Endothelial cell of umbilical vein (primary cell): ENCODE measurements at regions of chr3 and their contacts with region 1.

Region 1: DNA sequence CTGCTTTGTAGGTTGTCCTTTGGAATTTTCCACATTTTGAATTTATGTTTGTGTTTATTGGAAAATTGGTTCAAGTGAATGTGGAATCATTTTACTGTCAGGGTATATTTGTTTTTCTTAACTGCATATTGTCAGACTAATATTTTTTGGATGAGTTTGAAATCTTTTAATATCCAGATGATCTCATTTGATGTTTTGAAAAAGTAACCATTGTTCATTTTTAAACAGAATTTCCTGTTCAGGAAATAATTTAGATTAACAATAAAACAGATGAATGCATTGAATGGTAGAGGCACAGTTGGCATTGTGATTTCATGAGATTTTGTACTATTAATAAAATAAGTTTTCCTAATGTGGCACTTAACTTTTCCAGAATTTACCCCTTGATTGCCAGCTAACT is 15.5 kb downstream of the TRAK1 start:
- DNase-seq: peak; percentile 89
- H3K4me3 ChIP-seq: no peak overlapping the region
- H3K27ac ChIP-seq: peak overlapping the region; percentile 100
- H3K4me1 ChIP-seq: peaks cover 16% of the 10 kb centered on the region
- H3K27me3 ChIP-seq: no peaks in the 10 kb centered on the region
- CTCF ChIP-seq: no peak
- POLR2A ChIP-seq: no peak

Region 2: GRCh38 chr3:41317718-41318117 is 788.9 kb before region 1 on chr3:
- CTCF ChIA-PET with region 1: no interaction called
- POLR2A ChIA-PET with region 1: no interaction called
- dilution Hi-C with region 1: no loop called
- intact Hi-C with region 1: no loop called
- DNase-seq: peak; percentile 11
- H3K4me3 ChIP-seq: no peak overlapping the region
- H3K27ac ChIP-seq: no peak overlapping the region
- H3K4me1 ChIP-seq: peaks cover 3% of the 10 kb centered on the region
- H3K27me3 ChIP-seq: no peaks in the 10 kb centered on the region
- CTCF ChIP-seq: no peak
- POLR2A ChIP-seq: no peak

Region 3: DNA sequence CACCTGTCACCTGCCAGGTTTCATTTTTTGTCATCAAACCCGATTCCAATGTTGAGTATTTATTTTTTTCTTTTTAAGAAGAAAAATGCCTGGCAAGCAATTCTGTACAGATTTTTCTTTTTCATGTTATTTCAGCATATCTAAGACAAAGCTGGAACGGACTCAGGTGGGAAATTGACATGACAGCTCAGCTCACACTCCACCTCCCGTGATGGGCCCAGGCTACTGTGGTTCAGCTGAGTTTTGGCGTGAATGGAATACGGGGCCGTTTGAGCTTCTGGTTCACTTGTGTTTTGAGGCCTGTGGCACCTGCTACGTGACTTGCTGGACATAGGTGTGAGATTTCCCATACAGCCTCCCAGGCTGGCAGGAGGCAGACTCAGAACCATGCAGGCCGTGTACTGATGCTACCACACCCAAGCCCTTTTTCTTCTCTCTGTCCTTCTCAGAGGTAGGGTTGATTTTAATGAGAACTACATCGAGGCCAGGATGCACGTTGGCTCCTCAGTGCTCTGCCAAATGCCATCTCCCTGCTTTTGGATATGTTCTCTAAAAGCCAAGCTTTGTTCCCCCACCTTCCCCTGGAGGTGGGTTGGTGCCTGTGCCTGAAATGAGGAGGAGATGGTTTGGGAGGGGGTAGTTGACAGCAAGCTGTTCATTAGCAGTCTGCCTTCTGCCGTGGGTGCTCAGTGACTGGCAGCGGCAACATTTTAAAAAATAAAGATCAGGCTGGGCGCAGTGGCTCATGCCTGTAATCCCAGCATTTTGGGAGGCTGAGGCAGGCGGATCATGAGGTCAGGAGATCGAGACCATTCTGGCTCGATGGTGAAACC is 33.2 kb after region 1 on chr3:
- CTCF ChIA-PET with region 1: no interaction called
- POLR2A ChIA-PET with region 1: no interaction called
- dilution Hi-C with region 1: no loop called
- intact Hi-C with region 1: loop called (anchors 1 kb)
- DNase-seq: no peak
- H3K4me3 ChIP-seq: no peak overlapping the region
- H3K27ac ChIP-seq: no peak overlapping the region
- H3K4me1 ChIP-seq: no peaks in the 10 kb centered on the region
- H3K27me3 ChIP-seq: no peaks in the 10 kb centered on the region
- CTCF ChIP-seq: no peak
- POLR2A ChIP-seq: no peak

Region 4: DNA sequence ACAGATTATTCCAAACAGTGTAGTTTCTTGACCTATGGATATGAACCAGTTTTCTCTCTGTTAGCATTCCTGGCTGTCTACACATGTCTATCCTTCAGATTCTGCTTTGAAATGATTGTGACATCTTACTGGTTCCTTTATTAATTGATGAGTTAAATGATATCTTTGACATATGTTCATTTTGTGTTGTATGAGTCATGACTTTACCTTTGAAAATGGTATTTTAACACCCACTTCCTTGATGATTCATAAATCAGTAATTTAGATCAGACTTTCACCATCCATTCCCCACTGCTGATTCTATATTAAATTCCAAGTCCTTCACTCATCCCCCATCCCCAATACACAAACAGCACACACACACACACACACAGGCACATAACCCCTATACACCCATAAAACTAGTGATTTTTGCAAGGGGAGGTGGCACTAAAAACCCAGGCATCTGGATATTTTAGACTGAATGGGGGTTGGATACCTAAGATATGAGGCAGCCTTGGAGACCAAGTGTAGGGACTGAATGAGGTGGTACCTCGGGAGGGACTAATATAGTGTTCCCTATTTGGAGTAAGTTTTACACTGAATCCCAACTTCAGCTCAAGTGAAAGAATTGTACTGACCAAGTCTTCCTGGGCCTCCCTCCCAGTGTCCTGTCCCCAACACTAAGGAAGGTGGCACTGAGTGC is 149.6 kb after region 1 on chr3:
- CTCF ChIA-PET with region 1: no interaction called
- POLR2A ChIA-PET with region 1: no interaction called
- dilution Hi-C with region 1: no loop called
- intact Hi-C with region 1: no loop called
- DNase-seq: peak; percentile 37
- H3K4me3 ChIP-seq: no peak overlapping the region
- H3K27ac ChIP-seq: no peak overlapping the region
- H3K4me1 ChIP-seq: peaks cover 12% of the 10 kb centered on the region
- H3K27me3 ChIP-seq: peaks cover 10 to 16% of the 10 kb centered on the region in 2 experiments
- CTCF ChIP-seq: no peak
- POLR2A ChIP-seq: no peak